ENCODE measurements at regions of chr2 and their contacts with region 1.

Region 1: GRCh38 chr2:98385050-98385699 is 38.9 kb downstream of the CNGA3 start:
- DNase-seq: peak; percentile 71
- H3K4me3 ChIP-seq: no peak overlapping the region
- H3K27ac ChIP-seq: no peak overlapping the region
- H3K4me1 ChIP-seq: no peaks in the 10 kb centered on the region
- H3K27me3 ChIP-seq: peaks cover 1 to 7% of the 10 kb centered on the region in 2 experiments
- CTCF ChIP-seq: peak; percentile 97 to 98
- POLR2A ChIP-seq: no peak

Region 2: GRCh38 chr2:97713296-97714083 is 671.7 kb before region 1 on chr2 and contains the start of gene ZAP70:
- CTCF ChIA-PET with region 1: interaction called, 61 read pairs
- POLR2A ChIA-PET with region 1: no interaction called
- dilution Hi-C with region 1: no loop called
- intact Hi-C with region 1: loop called (anchors 1 kb)
- DNase-seq: no peak
- H3K4me3 ChIP-seq: no peak within 1 kb of the TSS
- H3K27ac ChIP-seq: no peak within 1 kb of the TSS
- H3K4me1 ChIP-seq: no peaks in the 10 kb centered on the region
- H3K27me3 ChIP-seq: no peaks in the 10 kb centered on the region
- CTCF ChIP-seq: no peak
- POLR2A ChIP-seq: no peak
- total RNA-seq, gene ZAP70: not detected in 2 replicates

Region 3: DNA sequence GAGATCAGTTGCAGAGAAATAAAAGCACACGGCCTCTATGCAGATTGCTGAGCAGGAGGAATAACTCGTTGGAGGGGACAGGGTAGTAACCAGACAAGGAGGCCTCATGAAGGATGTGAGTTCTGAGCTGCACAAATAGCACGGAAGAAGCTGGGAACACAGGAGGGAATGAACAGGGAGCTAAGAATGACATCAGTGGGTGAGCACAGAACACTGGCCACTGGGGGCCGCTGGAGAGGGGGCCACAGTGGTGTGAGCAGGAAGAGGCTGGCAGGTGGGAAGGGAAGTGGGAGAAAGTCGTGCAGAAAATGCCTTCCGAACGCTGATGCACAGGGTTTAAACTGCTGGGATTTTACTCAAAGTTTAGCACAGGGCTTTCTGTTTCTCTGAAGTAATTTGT is 610.8 kb before region 1 on chr2:
- CTCF ChIA-PET with region 1: interaction called, 12 read pairs
- POLR2A ChIA-PET with region 1: no interaction called
- dilution Hi-C with region 1: no loop called
- intact Hi-C with region 1: no loop called
- DNase-seq: peak; percentile 12
- H3K4me3 ChIP-seq: no peak overlapping the region
- H3K27ac ChIP-seq: no peak overlapping the region
- H3K4me1 ChIP-seq: no peaks in the 10 kb centered on the region
- H3K27me3 ChIP-seq: no peaks in the 10 kb centered on the region
- CTCF ChIP-seq: peak; percentile 47 to 69
- POLR2A ChIP-seq: no peak

Region 4: DNA sequence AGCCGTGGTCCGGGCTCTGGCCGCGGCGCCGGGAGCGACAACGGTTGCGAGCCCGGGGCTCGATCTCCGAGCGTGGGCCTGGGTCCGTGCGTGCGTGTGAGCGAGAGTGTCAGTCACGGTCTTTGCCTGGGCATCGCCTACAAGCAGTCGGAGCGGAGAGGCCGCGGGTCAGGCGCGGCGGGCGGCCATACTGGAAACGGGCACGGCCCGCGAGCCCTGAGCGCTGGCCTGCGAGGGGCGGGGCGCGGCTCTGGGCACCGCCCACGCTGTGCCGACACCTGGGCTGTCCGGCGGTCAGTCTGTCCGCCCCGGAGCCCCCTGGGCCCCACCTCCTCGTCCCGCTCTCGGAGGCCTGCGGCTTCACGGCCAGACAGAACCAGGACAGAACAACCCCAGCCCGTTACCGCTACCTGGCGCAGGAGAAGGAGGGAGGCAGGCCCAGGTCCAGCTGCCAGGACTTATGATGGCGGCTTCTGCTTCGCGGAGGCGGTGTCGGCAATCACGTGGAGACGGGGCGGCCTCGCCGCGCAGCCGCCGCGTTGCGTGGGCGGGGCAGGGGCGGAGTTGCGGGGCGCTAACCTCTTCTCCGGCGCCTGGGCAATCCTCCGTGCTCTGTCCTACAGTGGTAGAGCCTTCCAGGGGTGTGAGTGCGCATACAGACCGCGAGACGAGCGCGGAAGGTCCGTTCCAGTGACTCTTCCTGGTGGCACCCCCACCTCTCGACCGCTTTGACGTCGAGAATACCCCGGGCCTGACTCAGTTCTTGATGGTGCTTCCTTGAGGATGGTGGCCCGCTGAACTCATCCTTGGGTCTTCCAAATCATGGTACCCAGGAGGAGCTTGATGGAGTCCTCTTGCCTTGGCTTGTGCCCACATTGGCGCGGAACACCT is 389.2 kb before region 1 on chr2 and contains the start of gene TMEM131:
- CTCF ChIA-PET with region 1: interaction called, 4 read pairs
- POLR2A ChIA-PET with region 1: no interaction called
- dilution Hi-C with region 1: no loop called
- intact Hi-C with region 1: loop called (anchors 2 kb)
- DNase-seq: peak; percentile 94
- H3K4me3 ChIP-seq: peak within 1 kb of the TSS; percentile 59 to 99 (median 97)
- H3K27ac ChIP-seq: peak within 1 kb of the TSS; percentile 79
- H3K4me1 ChIP-seq: peaks cover 17% of the 10 kb centered on the region
- H3K27me3 ChIP-seq: peaks cover 2 to 7% of the 10 kb centered on the region in 2 experiments
- CTCF ChIP-seq: no peak
- POLR2A ChIP-seq: peak; percentile 69
- total RNA-seq, gene TMEM131: 24.1 and 28.6 TPM in 2 replicates

Region 5: DNA sequence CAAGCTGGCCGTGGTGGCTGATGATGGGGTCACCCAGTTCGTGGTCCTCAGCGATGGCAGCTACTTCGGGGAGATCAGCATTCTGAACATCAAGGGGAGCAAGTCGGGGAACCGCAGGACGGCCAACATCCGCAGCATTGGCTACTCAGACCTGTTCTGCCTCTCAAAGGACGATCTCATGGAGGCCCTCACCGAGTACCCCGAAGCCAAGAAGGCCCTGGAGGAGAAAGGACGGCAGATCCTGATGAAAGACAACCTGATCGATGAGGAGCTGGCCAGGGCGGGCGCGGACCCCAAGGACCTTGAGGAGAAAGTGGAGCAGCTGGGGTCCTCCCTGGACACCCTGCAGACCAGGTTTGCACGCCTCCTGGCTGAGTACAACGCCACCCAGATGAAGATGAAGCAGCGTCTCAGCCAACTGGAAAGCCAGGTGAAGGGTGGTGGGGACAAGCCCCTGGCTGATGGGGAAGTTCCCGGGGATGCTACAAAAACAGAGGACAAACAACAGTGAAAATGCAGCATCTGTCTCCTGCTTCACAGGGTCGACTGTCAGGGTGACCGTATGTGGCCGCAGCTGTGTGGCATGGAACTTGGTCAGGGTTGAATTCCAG is 11.7 kb after region 1 on chr2:
- CTCF ChIA-PET with region 1: interaction called, 12 read pairs
- POLR2A ChIA-PET with region 1: no interaction called
- dilution Hi-C with region 1: no loop called
- intact Hi-C with region 1: no loop called
- DNase-seq: no peak
- H3K4me3 ChIP-seq: no peak overlapping the region
- H3K27ac ChIP-seq: no peak overlapping the region
- H3K4me1 ChIP-seq: peaks cover 17% of the 10 kb centered on the region
- H3K27me3 ChIP-seq: peaks cover 12 to 22% of the 10 kb centered on the region in 2 experiments
- CTCF ChIP-seq: no peak
- POLR2A ChIP-seq: no peak

Region 6: DNA sequence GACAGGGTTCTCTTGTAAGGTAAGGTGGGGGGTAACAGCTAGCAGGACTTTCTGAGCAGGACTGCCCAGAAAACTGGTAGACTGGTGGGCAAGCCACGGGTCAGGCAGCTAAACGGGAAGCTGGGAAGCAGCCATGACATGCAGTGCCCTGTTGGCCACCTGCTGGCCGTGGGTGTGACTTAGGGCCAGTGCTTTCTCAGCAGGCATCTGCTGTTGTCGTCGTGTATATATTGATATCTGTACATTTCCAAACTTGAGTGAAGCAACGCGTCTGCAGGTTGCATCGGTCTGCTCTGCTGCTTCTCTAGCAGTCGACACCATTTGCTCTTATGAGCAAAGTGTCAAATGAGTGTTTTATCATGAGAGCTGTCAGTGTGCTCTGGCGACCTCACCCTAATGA is 192.1 kb after region 1 on chr2:
- CTCF ChIA-PET with region 1: no interaction called
- POLR2A ChIA-PET with region 1: no interaction called
- dilution Hi-C with region 1: no loop called
- intact Hi-C with region 1: no loop called
- DNase-seq: no peak
- H3K4me3 ChIP-seq: no peak overlapping the region
- H3K27ac ChIP-seq: no peak overlapping the region
- H3K4me1 ChIP-seq: no peaks in the 10 kb centered on the region
- H3K27me3 ChIP-seq: no peaks in the 10 kb centered on the region
- CTCF ChIP-seq: peak in 1 of 2 donors; percentile 18
- POLR2A ChIP-seq: no peak

Region 7: GRCh38 chr2:98634401-98635092 is 249.4 kb after region 1 on chr2:
- CTCF ChIA-PET with region 1: no interaction called
- POLR2A ChIA-PET with region 1: no interaction called
- dilution Hi-C with region 1: no loop called
- intact Hi-C with region 1: no loop called
- DNase-seq: peak; percentile 17
- H3K4me3 ChIP-seq: no peak overlapping the region
- H3K27ac ChIP-seq: no peak overlapping the region
- H3K4me1 ChIP-seq: no peaks in the 10 kb centered on the region
- H3K27me3 ChIP-seq: no peaks in the 10 kb centered on the region
- CTCF ChIP-seq: peak; percentile 36 to 43
- POLR2A ChIP-seq: no peak

Region 8: GRCh38 chr2:99748344-99748743 is 1363.2 kb after region 1 on chr2:
- CTCF ChIA-PET with region 1: no interaction called
- POLR2A ChIA-PET with region 1: no interaction called
- dilution Hi-C with region 1: no loop called
- intact Hi-C with region 1: no loop called
- DNase-seq: no peak
- H3K4me3 ChIP-seq: no peak overlapping the region
- H3K27ac ChIP-seq: no peak overlapping the region
- H3K4me1 ChIP-seq: no peaks in the 10 kb centered on the region
- H3K27me3 ChIP-seq: no peaks in the 10 kb centered on the region
- CTCF ChIP-seq: no peak
- POLR2A ChIP-seq: no peak